Activated B cell treated with CpG ODN at 0.5 μM for 24 hours (primary cell): ENCODE measurements at regions of chr3 and their contacts with region 1.

Region 1: DNA sequence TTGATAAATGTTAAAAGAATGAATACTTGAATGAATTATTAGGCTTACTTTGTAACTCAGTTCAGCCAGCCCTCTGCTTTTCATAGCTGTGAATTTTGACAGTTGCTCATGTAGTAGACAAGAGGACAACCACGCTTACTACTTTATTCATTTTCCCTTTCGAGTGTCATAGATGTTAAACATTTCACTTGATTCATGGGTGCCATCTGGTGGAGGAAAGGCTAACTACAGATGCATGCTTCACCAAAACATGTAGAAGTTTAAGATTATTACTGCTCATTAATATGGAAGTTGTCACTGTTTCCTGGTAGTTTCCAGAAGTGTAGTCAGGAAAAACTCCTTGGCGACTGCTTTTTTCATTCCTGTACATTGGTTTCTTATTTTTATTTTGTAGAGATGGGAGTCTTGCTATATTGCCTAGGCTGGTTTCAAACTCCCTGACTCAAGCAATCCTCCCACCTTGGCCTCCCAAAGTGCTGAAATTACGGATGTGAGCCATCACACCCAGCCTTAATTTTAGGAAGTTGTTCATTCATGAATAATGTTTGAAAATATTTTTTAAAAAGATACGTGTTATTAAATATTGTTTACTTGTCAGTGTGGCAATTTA is 163.2 kb downstream of the B3GALNT1 start:
- DNase-seq: no peak
- ATAC-seq: peak; percentile 87
- H3K4me3 Mint-ChIP-seq: no peak overlapping the region
- H3K27ac Mint-ChIP-seq: no peak overlapping the region
- H3K4me1 Mint-ChIP-seq: peaks cover 4% of the 10 kb centered on the region
- H3K27me3 Mint-ChIP-seq: no peaks in the 10 kb centered on the region
- CTCF ChIP-seq: no peak

Region 2: GRCh38 chr3:160538895-160539294 is 403.1 kb before region 1 on chr3:
- CTCF ChIA-PET with region 1: no interaction called
- POLR2A ChIA-PET with region 1: no interaction called
- intact Hi-C with region 1: loop called (anchors 10 kb)
- DNase-seq: no peak
- ATAC-seq: no peak
- H3K4me3 Mint-ChIP-seq: no peak overlapping the region
- H3K27ac Mint-ChIP-seq: no peak overlapping the region
- H3K4me1 Mint-ChIP-seq: peaks cover 22% of the 10 kb centered on the region
- H3K27me3 Mint-ChIP-seq: no peaks in the 10 kb centered on the region
- CTCF ChIP-seq: no peak

Region 3: DNA sequence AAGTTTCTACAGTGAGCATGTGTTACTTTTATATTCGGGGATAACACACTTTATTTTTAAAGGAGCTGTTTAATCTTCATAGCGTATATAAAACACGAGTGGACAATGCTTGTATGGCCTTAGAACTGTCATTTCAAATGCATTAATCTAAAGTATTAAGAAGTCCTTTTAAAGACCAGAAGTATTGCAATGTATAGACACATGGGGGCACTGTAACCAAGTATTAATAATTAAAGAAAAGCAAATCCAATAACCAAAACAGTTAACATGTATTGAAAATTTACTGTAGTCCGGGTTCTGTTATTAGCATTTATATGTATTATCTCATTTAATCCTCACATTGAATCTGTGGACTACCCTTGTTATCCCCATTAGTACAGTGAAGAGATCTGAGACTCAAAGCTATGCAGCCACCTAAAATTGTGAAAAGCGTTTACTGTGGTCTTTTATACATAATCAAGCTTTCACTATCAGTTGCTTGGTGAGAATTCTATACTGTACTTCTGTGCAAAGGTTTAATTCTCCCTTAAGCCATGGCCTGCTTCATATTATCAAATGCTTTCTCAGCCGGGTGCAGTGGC is 254.9 kb before region 1 on chr3:
- CTCF ChIA-PET with region 1: interaction called, 5 read pairs
- POLR2A ChIA-PET with region 1: no interaction called
- intact Hi-C with region 1: loop called (anchors 1 kb)
- DNase-seq: no peak
- ATAC-seq: no peak
- H3K4me3 Mint-ChIP-seq: no peak overlapping the region
- H3K27ac Mint-ChIP-seq: no peak overlapping the region
- H3K4me1 Mint-ChIP-seq: no peaks in the 10 kb centered on the region
- H3K27me3 Mint-ChIP-seq: no peaks in the 10 kb centered on the region
- CTCF ChIP-seq: no peak

Region 4: GRCh38 chr3:160707187-160707794 is 234.7 kb before region 1 on chr3:
- CTCF ChIA-PET with region 1: interaction called, 12 read pairs
- POLR2A ChIA-PET with region 1: no interaction called
- intact Hi-C with region 1: loop called (anchors 1 kb)
- DNase-seq: no peak
- ATAC-seq: peak; percentile 60
- H3K4me3 Mint-ChIP-seq: no peak overlapping the region
- H3K27ac Mint-ChIP-seq: no peak overlapping the region
- H3K4me1 Mint-ChIP-seq: no peaks in the 10 kb centered on the region
- H3K27me3 Mint-ChIP-seq: peaks cover 16% of the 10 kb centered on the region
- CTCF ChIP-seq: no peak